HCT116 (cell line): ENCODE measurements at regions of chr15 and their contacts with region 1.

Region 1: DNA sequence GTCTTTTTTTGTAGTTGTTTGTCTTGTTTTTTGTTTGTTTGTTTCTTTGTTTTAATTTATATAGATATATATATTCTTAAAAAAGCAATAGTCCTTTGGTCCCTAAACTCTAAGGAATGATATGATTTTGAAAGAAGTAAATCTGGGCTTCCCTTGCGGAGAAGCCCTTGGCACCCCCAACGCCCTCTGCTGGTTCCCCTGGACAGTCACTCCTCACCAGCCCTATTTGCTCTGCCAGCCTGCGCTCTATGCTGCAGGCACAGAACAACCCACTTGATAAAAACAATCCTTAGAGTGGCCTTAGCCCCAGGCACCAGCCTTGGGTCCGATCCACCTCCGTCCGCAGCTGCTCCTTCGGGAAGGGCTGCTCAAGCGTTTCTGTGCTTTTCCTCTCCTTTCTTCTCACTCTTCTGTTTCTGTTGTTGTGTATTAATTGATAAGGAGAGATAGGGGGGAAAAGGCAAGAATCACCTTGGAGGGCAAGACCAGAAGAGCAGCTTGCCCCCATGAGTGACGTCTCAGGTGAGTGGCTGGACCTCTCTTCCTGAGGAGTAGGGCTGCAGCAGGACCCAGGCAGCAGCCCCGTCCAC is 13.7 kb upstream of the PARP6 start:
- DNase-seq: peak; percentile 22
- ATAC-seq: peak; percentile 93
- H3K4me3 ChIP-seq: no peak overlapping the region
- H3K27ac ChIP-seq: no peak overlapping the region
- H3K4me1 ChIP-seq: peaks cover 0 to 11% of the 10 kb centered on the region in 2 experiments; a peak in 1 of 4 replicates
- H3K27me3 ChIP-seq: no peaks in the 10 kb centered on the region
- CTCF ChIP-seq: peak; percentile 48 to 76 (median 62); a peak in 5 of 6 replicates
- POLR2A ChIP-seq: no peak
- RAD21 ChIP-seq: peak; percentile 63

Region 2: DNA sequence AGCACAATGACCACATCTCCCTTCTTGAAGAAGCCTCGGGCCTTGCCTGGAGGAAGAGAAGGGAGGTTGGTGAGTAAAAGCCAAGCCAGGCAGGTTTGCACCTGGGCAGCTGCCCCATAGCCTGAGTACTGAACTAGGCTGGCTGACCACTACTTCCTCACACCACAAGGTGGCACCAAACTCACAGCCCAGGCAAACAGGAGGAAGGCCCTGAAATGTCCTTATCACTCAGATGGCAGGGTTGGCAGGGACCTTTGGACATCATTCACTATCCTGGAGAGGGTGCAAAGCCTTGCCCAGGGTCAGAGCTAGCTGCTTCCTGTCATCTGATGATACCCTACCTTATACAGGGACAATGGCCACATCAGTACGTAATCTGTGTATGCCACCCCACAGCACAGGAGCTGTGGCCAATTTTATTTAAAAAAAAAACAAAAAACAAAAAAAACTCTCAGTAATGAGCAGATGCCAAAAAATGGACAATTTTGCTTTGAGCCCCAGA is 86.3 kb before region 1 on chr15:
- CTCF ChIA-PET with region 1: no interaction called
- POLR2A ChIA-PET with region 1: interaction called, 4 read pairs
- RAD21 ChIA-PET with region 1: interaction called in 1 of 2 experiments, 6 read pairs
- intact Hi-C with region 1: loop called (anchors 1 kb)
- DNase-seq: peak; percentile 65
- ATAC-seq: peak; percentile 53
- H3K4me3 ChIP-seq: no peak overlapping the region
- H3K27ac ChIP-seq: peak overlapping the region; percentile 0; the same call in 1 of the 2 replicates
- H3K4me1 ChIP-seq: peaks cover 5 to 32% of the 10 kb centered on the region in 2 experiments; a peak in 3 of 4 replicates
- H3K27me3 ChIP-seq: no peaks in the 10 kb centered on the region
- CTCF ChIP-seq: peak; percentile 59 to 95 (median 86); a peak in 5 of 6 replicates
- POLR2A ChIP-seq: no peak
- RAD21 ChIP-seq: peak; percentile 86